ENCODE measurements at regions of chr10 and their contacts with region 1.

Region 1: GRCh38 chr10:22316285-22317120 is at the start of gene COMMD3:
- DNase-seq: peak; percentile 79 to 83
- ATAC-seq: peak; percentile 80 to 82
- H3K4me3 ChIP-seq: peak within 1 kb of the TSS; percentile 79 to 96 (median 84)
- H3K27ac ChIP-seq: peak within 1 kb of the TSS; percentile 94 to 97 (median 95)
- H3K4me1 ChIP-seq: peaks cover 24 to 30% of the 10 kb centered on the region in 2 donors
- H3K27me3 ChIP-seq: no peaks in the 10 kb centered on the region
- CTCF ChIP-seq: no peak
- POLR2A ChIP-seq: peak; percentile 81 to 90
- total RNA-seq, gene COMMD3: 26.8 to 50.9 (median 37.9) TPM

Region 2: GRCh38 chr10:21525367-21526183 is 790.9 kb before region 1 on chr10 and contains the start of gene SKIDA1:
- in situ Hi-C with region 1: loop called in 3 of 4 experiments (anchors 10 to 25 kb)
- intact Hi-C with region 1: no loop called
- DNase-seq: peak; percentile 82 to 89
- ATAC-seq: peak; percentile 75 to 76
- H3K4me3 ChIP-seq: peak within 1 kb of the TSS; percentile 56 to 80 (median 74)
- H3K27ac ChIP-seq: peak within 1 kb of the TSS; percentile 90 to 100 (median 98)
- H3K4me1 ChIP-seq: peaks cover 25 to 32% of the 10 kb centered on the region in 2 donors
- H3K27me3 ChIP-seq: no peaks in the 10 kb centered on the region
- CTCF ChIP-seq: no peak
- POLR2A ChIP-seq: no peak
- total RNA-seq, gene SKIDA1: 0.09 TPM in 1 of 4 donors, not detected in the others

Region 3: GRCh38 chr10:21989453-21990154 is 326.9 kb before region 1 on chr10:
- in situ Hi-C with region 1: loop called in 1 of 4 experiments (anchors 10 kb)
- intact Hi-C with region 1: no loop called
- DNase-seq: no peak
- ATAC-seq: peak; percentile 60 to 73
- H3K4me3 ChIP-seq: no peak overlapping the region
- H3K27ac ChIP-seq: no peak overlapping the region
- H3K4me1 ChIP-seq: no peaks in the 10 kb centered on the region
- H3K27me3 ChIP-seq: no peaks in the 10 kb centered on the region
- CTCF ChIP-seq: peak in 4 of 5 experiments; percentile 9 to 57 (median 33)
- POLR2A ChIP-seq: no peak

Region 4: DNA sequence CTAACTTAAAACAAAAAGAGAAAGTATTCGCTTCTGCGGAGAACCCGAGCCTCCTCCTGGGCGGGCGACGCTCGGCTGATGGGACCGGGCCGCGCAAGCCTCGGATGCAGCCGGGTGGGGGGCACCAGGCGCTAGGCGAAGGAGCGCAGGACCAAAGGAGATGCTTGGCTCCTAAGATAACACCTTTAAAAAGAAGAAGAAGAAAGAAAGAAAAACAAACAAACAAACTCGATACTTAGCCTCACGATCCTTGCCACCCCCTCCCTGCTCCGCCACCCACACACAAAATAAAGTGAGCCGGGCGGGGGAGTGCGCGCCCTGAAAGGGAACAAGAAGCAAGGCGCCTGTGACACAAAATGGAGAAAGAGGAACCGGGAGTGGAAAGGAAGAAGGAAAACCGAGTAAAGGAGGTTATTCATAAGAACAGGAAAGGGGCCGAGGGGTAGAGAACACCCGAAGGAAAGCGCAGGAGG is 64.7 kb before region 1 on chr10:
- in situ Hi-C with region 1: loop called in 2 of 4 experiments (anchors 5 to 10 kb)
- intact Hi-C with region 1: loop called (anchors 2 kb)
- DNase-seq: peak; percentile 16 to 35
- ATAC-seq: peak; percentile 68 to 74
- H3K4me3 ChIP-seq: peak overlapping the region; percentile 72 to 84 (median 80)
- H3K27ac ChIP-seq: peak overlapping the region; percentile 84 to 87 (median 86)
- H3K4me1 ChIP-seq: peaks cover 7 to 9% of the 10 kb centered on the region in 2 donors
- H3K27me3 ChIP-seq: no peaks in the 10 kb centered on the region
- CTCF ChIP-seq: no peak
- POLR2A ChIP-seq: no peak

Region 5: GRCh38 chr10:22550732-22551131 is 234.2 kb after region 1 on chr10:
- in situ Hi-C with region 1: no loop called
- intact Hi-C with region 1: loop called (anchors 5 kb)
- DNase-seq: peak in 1 of 2 donors; percentile 34
- ATAC-seq: no peak
- H3K4me3 ChIP-seq: no peak overlapping the region
- H3K27ac ChIP-seq: peak overlapping the region in 2 of 4 donors; percentile 76 to 83
- H3K4me1 ChIP-seq: peaks cover 33 to 35% of the 10 kb centered on the region in 2 donors
- H3K27me3 ChIP-seq: no peaks in the 10 kb centered on the region
- CTCF ChIP-seq: peak; percentile 29 to 54 (median 47)
- POLR2A ChIP-seq: no peak

Region 6: GRCh38 chr10:22606164-22606614 is 289.7 kb after region 1 on chr10:
- in situ Hi-C with region 1: no loop called
- intact Hi-C with region 1: no loop called
- DNase-seq: peak in 1 of 2 donors; percentile 39
- ATAC-seq: no peak
- H3K4me3 ChIP-seq: no peak overlapping the region
- H3K27ac ChIP-seq: no peak overlapping the region
- H3K4me1 ChIP-seq: peaks cover 0 to 5% of the 10 kb centered on the region in 2 donors
- H3K27me3 ChIP-seq: no peaks in the 10 kb centered on the region
- CTCF ChIP-seq: no peak
- POLR2A ChIP-seq: no peak

Region 7: GRCh38 chr10:23438550-23439441 is 1122.3 kb after region 1 on chr10 and contains the start of gene OTUD1:
- in situ Hi-C with region 1: loop called in 1 of 4 experiments (anchors 25 kb)
- intact Hi-C with region 1: loop called (anchors 10 kb)
- DNase-seq: peak; percentile 93
- ATAC-seq: peak; percentile 77 to 84
- H3K4me3 ChIP-seq: peak within 1 kb of the TSS; percentile 63 to 81 (median 72)
- H3K27ac ChIP-seq: peak within 1 kb of the TSS; percentile 91 to 95 (median 92)
- H3K4me1 ChIP-seq: peaks cover 20 to 26% of the 10 kb centered on the region in 2 donors
- H3K27me3 ChIP-seq: no peaks in the 10 kb centered on the region
- CTCF ChIP-seq: peak in 4 of 5 experiments; percentile 14 to 36 (median 25)
- POLR2A ChIP-seq: no peak
- total RNA-seq, gene OTUD1: 5.3 to 16.9 (median 7.7) TPM

Measured in gastrocnemius medialis (tissue), 4 donors.